ENCODE measurements at regions of chr6 and their contacts with region 1.

Region 1: DNA sequence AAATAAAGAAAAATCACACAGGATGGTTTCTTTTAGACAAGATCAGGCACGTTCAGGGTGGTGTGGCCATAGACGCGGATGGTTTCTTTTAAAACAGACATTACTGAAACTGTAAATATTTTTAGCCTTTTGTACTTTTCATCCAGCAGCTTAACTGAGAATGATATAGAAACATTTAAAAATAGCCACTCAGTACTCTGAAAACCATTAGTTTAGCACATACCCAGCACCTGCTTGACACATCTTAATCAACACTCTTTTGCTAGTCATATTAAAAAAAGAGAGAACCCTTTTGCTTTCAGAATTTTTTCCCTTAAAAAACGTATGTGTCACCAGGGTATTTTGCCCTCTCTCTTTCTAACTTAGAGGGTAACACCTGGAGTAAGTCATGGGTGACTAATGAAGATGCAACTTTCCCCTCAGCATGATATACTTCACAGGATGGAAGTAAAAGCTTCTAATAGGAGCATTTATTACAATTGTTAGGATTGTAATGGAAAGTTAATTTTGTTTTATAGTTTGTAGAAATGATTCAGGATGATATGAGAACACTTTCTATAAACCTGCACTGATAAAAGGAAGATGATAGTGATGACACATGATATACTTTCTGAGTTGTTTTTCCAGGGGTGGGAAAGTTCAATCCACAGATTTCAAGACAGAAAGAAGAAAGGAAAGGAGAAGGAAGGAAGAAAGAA is 45.2 kb downstream of the BACH2 start:
- DNase-seq: no peak
- ATAC-seq: no peak
- H3K4me3 ChIP-seq: no peak overlapping the region
- H3K4me3 Mint-ChIP-seq: peak overlapping the region; percentile 3
- H3K27ac ChIP-seq: no peak overlapping the region
- H3K27ac Mint-ChIP-seq: peak overlapping the region; percentile 84
- H3K4me1 ChIP-seq: peaks cover 12% of the 10 kb centered on the region
- H3K4me1 Mint-ChIP-seq: peaks cover 85% of the 10 kb centered on the region
- H3K27me3 ChIP-seq: no peaks in the 10 kb centered on the region
- H3K27me3 Mint-ChIP-seq: no peaks in the 10 kb centered on the region
- CTCF ChIP-seq: no peak

Region 2: DNA sequence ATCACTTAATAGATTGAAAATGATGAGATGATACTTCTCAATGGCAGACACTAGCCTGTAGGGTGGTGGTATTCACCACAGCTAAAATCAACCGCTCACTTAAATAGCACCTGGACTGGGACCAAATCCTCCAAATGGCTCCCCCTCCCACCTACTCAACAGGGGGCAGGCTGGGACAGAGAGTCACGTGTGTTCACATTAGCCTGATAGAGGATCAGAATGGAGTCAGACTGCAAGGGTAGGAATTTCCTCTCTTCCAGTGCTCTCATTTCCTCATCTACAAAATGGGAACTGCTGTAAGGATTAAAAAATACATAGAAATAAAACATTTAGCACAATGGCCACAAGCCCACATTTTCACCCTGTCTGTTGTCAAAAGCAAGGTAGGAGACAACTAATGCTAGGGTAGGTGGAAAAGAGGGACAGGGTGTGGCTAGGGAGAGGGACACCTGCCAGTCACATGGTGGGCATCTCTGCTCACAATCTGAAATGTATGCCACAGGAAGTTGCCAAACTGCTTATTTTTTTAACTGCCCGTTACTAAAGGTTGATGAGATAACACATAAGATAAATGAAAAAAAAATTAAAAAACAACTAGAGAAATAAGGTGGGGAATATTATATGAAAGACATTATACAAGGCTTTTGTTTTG is 10.1 kb before region 1 on chr6:
- CTCF ChIA-PET with region 1: no interaction called
- POLR2A ChIA-PET with region 1: interaction called, 3 read pairs
- intact Hi-C with region 1: loop called in 1 of 2 experiments (anchors 2 kb)
- DNase-seq: peak in 2 of 14 experiments; percentile 29 to 42
- ATAC-seq: no peak
- H3K4me3 ChIP-seq: no peak overlapping the region
- H3K4me3 Mint-ChIP-seq: peak overlapping the region; percentile 30
- H3K27ac ChIP-seq: peak overlapping the region in 1 of 2 donors; percentile 21
- H3K27ac Mint-ChIP-seq: peak overlapping the region; percentile 60
- H3K4me1 ChIP-seq: peaks cover 25% of the 10 kb centered on the region
- H3K4me1 Mint-ChIP-seq: peaks cover 74% of the 10 kb centered on the region
- H3K27me3 ChIP-seq: no peaks in the 10 kb centered on the region
- H3K27me3 Mint-ChIP-seq: no peaks in the 10 kb centered on the region
- CTCF ChIP-seq: no peak

Region 3: DNA sequence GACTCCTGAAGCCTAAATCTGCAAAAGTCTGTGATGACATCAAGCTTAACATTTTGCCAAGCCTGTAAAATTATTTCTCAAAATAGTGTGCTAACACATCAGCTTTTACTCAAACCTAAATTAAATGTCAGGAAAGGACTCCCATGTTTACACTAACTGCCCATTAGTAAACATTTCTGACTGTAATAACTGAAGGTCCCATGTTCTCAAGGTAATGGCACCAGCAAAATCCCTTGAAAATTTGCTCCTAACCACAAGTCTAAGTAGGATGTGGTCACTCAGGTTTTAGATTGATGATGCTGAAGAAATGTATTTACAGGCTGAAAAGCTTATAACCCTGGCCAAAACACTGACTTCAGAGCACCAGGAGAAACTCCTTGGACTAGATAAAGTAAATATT is 12.2 kb after region 1 on chr6:
- CTCF ChIA-PET with region 1: interaction called, 4 read pairs
- POLR2A ChIA-PET with region 1: interaction called, 5 read pairs
- intact Hi-C with region 1: loop called (anchors 2 kb)
- DNase-seq: peak in 1 of 14 experiments; percentile 46
- ATAC-seq: no peak
- H3K4me3 ChIP-seq: no peak overlapping the region
- H3K4me3 Mint-ChIP-seq: peak overlapping the region; percentile 40
- H3K27ac ChIP-seq: no peak overlapping the region
- H3K27ac Mint-ChIP-seq: peak overlapping the region; percentile 96
- H3K4me1 ChIP-seq: peaks cover 19% of the 10 kb centered on the region
- H3K4me1 Mint-ChIP-seq: peaks cover 97% of the 10 kb centered on the region
- H3K27me3 ChIP-seq: no peaks in the 10 kb centered on the region
- H3K27me3 Mint-ChIP-seq: no peaks in the 10 kb centered on the region
- CTCF ChIP-seq: no peak

Region 4: DNA sequence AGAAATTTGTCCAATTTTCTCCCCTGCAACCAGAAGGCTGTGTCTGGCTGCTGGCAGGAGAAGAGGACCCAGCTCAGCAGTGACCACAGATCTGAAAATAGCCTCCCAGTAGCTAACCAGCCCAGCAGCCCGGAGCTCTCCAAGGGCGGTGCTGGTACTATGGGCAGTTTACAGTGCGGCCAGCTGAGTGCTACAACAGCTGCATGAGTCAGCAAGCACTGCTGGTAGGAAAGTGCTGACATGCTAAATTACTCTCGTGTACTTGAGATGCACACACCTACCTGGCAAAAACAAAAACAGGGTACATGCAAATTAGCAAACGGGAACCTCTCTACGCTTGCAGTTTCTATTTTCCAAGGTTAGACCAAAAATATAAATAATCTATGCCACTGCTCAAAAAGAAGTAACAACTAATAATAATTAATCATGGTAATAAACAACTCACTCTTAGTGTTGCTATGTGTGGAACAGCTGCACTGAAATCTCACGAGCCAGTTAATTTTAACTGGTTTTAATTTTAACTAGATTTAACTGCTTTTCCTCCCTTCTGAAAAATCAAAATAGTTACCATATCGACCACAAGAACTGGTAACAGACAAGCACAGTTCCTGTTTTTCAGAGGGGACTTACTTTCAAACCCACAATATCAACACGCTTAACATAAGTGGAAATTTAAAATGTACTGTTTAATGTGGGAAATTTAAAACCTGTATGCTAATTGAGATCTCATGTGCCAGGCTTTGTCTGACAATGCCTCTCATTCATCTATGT is 34.4 kb after region 1 on chr6:
- CTCF ChIA-PET with region 1: no interaction called
- POLR2A ChIA-PET with region 1: no interaction called
- intact Hi-C with region 1: loop called in 1 of 2 experiments (anchors 5 kb)
- DNase-seq: peak in 11 of 14 experiments; percentile 21 to 79 (median 45)
- ATAC-seq: peak; percentile 47
- H3K4me3 ChIP-seq: peak overlapping the region; percentile 54
- H3K4me3 Mint-ChIP-seq: peak overlapping the region; percentile 83
- H3K27ac ChIP-seq: peak overlapping the region; percentile 12 to 80
- H3K27ac Mint-ChIP-seq: peak overlapping the region; percentile 91
- H3K4me1 ChIP-seq: peaks cover 38% of the 10 kb centered on the region
- H3K4me1 Mint-ChIP-seq: peaks cover 93% of the 10 kb centered on the region
- H3K27me3 ChIP-seq: no peaks in the 10 kb centered on the region
- H3K27me3 Mint-ChIP-seq: no peaks in the 10 kb centered on the region
- CTCF ChIP-seq: no peak

Region 5: GRCh38 chr6:91132461-91132860 is 881.0 kb after region 1 on chr6:
- CTCF ChIA-PET with region 1: no interaction called
- POLR2A ChIA-PET with region 1: no interaction called
- intact Hi-C with region 1: no loop called
- DNase-seq: no peak
- ATAC-seq: no peak
- H3K4me3 ChIP-seq: no peak overlapping the region
- H3K4me3 Mint-ChIP-seq: no peak overlapping the region
- H3K27ac ChIP-seq: no peak overlapping the region
- H3K27ac Mint-ChIP-seq: no peak overlapping the region
- H3K4me1 ChIP-seq: no peaks in the 10 kb centered on the region
- H3K4me1 Mint-ChIP-seq: no peaks in the 10 kb centered on the region
- H3K27me3 ChIP-seq: no peaks in the 10 kb centered on the region
- H3K27me3 Mint-ChIP-seq: no peaks in the 10 kb centered on the region
- CTCF ChIP-seq: no peak

Region 6: DNA sequence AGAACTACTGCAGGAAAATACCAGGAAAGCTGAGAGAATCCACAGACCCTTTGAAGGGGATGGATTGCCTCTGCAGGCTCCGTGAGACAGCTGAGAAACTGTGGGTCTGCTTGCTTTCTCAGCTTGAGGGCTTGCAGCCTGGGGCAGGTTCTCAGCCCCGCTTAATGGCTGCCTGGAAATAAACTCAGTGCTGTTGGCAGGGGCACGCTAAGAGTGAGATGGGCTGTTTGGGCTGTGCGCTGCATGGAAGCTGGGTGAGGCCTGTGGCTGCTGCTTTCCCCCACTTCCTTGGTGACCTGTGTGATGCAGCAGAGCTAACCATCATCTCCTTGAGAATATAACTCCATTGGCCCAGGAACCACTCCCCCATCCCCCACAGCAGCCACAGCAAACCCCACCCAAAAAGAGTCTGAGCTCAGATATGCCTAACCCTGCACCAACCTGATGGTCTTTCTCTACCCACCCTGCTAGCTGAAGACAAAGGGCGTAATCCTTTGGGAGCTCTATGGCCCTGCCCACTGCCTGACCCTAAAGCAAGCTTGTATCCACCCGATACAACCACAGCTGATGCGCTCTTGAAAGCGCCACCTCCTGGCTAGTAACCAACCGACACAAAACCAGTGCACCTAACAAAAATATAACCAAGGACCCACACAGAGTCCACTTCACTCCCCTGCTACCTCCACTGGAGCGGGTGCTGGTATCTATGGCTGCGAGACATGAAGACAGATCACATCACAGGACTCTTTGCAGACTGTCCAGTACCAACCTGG is 1136.0 kb after region 1 on chr6:
- CTCF ChIA-PET with region 1: no interaction called
- POLR2A ChIA-PET with region 1: no interaction called
- intact Hi-C with region 1: no loop called
- DNase-seq: no peak
- ATAC-seq: no peak
- H3K4me3 ChIP-seq: no peak overlapping the region
- H3K4me3 Mint-ChIP-seq: no peak overlapping the region
- H3K27ac ChIP-seq: no peak overlapping the region
- H3K27ac Mint-ChIP-seq: no peak overlapping the region
- H3K4me1 ChIP-seq: no peaks in the 10 kb centered on the region
- H3K4me1 Mint-ChIP-seq: no peaks in the 10 kb centered on the region
- H3K27me3 ChIP-seq: no peaks in the 10 kb centered on the region
- H3K27me3 Mint-ChIP-seq: no peaks in the 10 kb centered on the region
- CTCF ChIP-seq: no peak